Left lung (tissue), 14 donors: ENCODE measurements at regions of chr5 and their contacts with region 1.

Region 1: DNA sequence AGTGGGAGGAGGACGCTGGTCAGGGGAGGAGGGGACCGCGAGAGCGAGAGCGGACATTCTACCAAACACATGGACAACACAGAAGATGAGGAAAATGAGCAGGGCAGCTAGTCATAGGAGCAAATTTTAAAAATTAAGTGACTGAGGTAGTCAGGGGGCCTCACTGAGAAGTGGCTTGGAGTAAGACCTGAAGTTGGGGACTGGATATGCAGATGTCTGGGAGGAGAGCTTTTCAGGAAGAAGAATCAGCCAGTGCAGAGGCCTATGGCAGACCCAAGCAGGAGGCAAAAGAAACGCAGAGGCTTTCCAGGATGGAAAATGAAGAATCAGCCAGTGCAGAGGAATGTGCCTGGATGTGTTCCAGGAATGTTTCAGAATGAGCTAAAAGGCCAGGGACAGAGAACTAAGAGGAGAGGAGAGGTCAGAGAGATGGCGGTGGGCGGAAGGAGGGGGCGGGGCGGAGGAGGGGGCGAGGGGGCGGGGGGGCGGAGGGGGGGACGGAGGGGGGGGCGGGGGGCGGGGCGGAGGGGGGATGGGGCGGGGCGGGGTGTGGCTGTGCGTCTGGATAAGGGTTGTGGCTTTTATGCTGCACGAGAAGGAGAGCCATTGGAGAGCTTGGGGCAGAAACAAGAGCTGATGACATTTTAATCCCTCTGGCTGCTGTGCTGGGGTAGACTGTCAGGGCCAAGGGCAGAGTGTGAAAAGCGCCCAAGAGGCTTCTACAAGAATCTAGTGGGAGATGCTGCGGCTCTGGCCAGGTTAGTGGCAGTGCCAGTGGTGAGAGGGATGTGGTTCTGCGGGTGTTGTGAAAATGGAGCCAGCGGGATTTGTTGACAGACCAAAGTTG is 129.6 kb downstream of the KCNIP1 start:
- DNase-seq: peak in 2 of 4 donors; percentile 88 to 90
- ATAC-seq: peak; percentile 61
- H3K4me3 ChIP-seq: no peak overlapping the region
- H3K27ac ChIP-seq: peak overlapping the region in 1 of 2 donors; percentile 33
- H3K4me1 ChIP-seq: peaks cover 3 to 15% of the 10 kb centered on the region in 2 donors
- H3K27me3 ChIP-seq: peaks cover 0 to 18% of the 10 kb centered on the region in 2 donors
- CTCF ChIP-seq: peak in 1 of 2 donors; percentile 7

Region 2: GRCh38 chr5:170434966-170435605 is 198.4 kb before region 1 on chr5:
- intact Hi-C with region 1: loop called (anchors 5 to 10 kb)
- DNase-seq: peak; percentile 43 to 91 (median 66)
- ATAC-seq: peak; percentile 98
- H3K4me3 ChIP-seq: no peak overlapping the region
- H3K27ac ChIP-seq: no peak overlapping the region
- H3K4me1 ChIP-seq: no peaks in the 10 kb centered on the region
- H3K27me3 ChIP-seq: no peaks in the 10 kb centered on the region
- CTCF ChIP-seq: peak; percentile 98 to 99

Region 3: GRCh38 chr5:170504031-170504596 is 129.3 kb before region 1 on chr5:
- intact Hi-C with region 1: no loop called
- DNase-seq: peak in 1 of 4 donors; percentile 32
- ATAC-seq: peak; percentile 34
- H3K4me3 ChIP-seq: no peak overlapping the region
- H3K27ac ChIP-seq: no peak overlapping the region
- H3K4me1 ChIP-seq: peaks cover 0 to 8% of the 10 kb centered on the region in 2 donors
- H3K27me3 ChIP-seq: peaks cover 8 to 54% of the 10 kb centered on the region in 2 donors
- CTCF ChIP-seq: no peak